Activated CD4-positive, alpha-beta memory T cell treated with anti-CD3 and anti-CD28 coated beads for 36 hours (primary cell): ENCODE measurements at regions of chr5 and their contacts with region 1.

Region 1: GRCh38 chr5:101678481-101679193 is 617.4 kb downstream of the SLCO4C1 start:
- DNase-seq: peak; percentile 32
- H3K4me3 Mint-ChIP-seq: no peak overlapping the region
- H3K27ac Mint-ChIP-seq: no peak overlapping the region
- H3K4me1 Mint-ChIP-seq: no peaks in the 10 kb centered on the region
- H3K27me3 Mint-ChIP-seq: no peaks in the 10 kb centered on the region

Region 2: DNA sequence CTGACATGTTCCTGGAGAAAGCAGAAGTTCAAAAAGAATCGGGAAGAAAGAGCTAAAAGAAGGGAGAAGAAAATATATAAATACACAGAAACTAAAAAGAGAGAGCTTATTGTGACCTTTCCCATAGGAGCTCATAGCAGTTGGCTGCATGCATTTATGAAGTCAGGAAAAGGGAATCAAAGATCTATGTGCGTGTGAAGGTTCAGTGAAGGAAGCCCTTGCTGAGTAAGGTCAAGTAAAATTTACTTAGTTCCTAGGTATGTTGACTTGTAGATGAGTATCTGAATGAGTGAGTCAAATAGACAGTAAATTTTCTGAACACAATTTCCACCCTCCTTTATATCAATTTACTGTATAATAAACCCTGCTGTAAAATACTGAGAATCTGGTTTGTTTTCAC is 15.1 kb before region 1 on chr5:
- CTCF ChIA-PET with region 1: interaction called, 11 read pairs
- POLR2A ChIA-PET with region 1: no interaction called
- intact Hi-C with region 1: no loop called
- DNase-seq: no peak
- H3K4me3 Mint-ChIP-seq: no peak overlapping the region
- H3K27ac Mint-ChIP-seq: no peak overlapping the region
- H3K4me1 Mint-ChIP-seq: no peaks in the 10 kb centered on the region
- H3K27me3 Mint-ChIP-seq: no peaks in the 10 kb centered on the region